H1 (cell line): ENCODE measurements at regions of chr18 and their contacts with region 1.

Region 1: GRCh38 chr18:63963615-63964256 is 6.1 kb upstream of the SERPINB8 start:
- DNase-seq: no peak
- H3K4me3 ChIP-seq: no peak overlapping the region
- H3K27ac ChIP-seq: no peak overlapping the region
- H3K4me1 ChIP-seq: no peaks in the 10 kb centered on the region; a peak in 1 of 7 replicates
- H3K27me3 ChIP-seq: no peaks in the 10 kb centered on the region; a peak in 1 of 7 replicates
- CTCF ChIP-seq: peak in 2 of 3 experiments; percentile 66 to 83; a peak in 3 of 4 replicates
- EP300 ChIP-seq: no peak
- POLR2A ChIP-seq: no peak
- RAD21 ChIP-seq: peak; percentile 64 to 65

Region 2: DNA sequence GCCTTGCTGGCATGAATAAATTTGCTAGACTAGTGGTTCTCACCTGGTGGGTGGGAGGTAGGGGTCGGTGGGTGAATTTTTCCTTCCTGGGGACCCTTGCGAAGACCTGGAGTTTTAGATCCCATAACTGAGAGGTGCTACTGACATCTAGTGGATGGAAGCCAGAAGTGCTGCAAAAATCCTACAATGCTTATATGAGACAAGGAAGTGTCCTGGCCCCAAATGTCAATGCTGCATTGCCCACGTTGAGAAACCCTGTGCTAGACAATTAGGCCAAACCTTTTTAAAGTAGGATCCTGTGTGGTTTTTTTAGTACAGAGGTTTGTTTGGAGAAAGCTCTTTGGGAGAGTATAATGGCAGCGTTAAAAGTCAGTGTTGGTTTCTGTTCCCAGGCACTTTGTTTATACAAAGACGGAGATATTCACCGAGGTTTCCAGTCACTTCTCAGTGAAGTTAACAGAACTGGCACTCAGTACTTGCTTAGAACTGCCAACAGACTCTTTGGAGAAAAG is 15.7 kb after region 1 on chr18:
- CTCF ChIA-PET with region 1: interaction called, 59 read pairs
- POLR2A ChIA-PET with region 1: no interaction called
- DNase-seq: peak in 1 of 2 experiments; percentile 61
- H3K4me3 ChIP-seq: no peak overlapping the region
- H3K27ac ChIP-seq: no peak overlapping the region
- H3K4me1 ChIP-seq: no peaks in the 10 kb centered on the region
- H3K27me3 ChIP-seq: peaks cover 21 to 52% (median 34%) of the 10 kb centered on the region in 4 experiments
- CTCF ChIP-seq: peak in 2 of 3 experiments; percentile 78 to 87; a peak in 3 of 4 replicates
- EP300 ChIP-seq: no peak
- POLR2A ChIP-seq: no peak
- RAD21 ChIP-seq: peak; percentile 80 to 81

Region 3: GRCh38 chr18:63987743-63988142 is 24.0 kb after region 1 on chr18:
- CTCF ChIA-PET with region 1: interaction called, 34 read pairs
- POLR2A ChIA-PET with region 1: no interaction called
- DNase-seq: no peak
- H3K4me3 ChIP-seq: no peak overlapping the region
- H3K27ac ChIP-seq: no peak overlapping the region
- H3K4me1 ChIP-seq: no peaks in the 10 kb centered on the region
- H3K27me3 ChIP-seq: no peaks in the 10 kb centered on the region
- CTCF ChIP-seq: no peak
- EP300 ChIP-seq: no peak
- POLR2A ChIP-seq: no peak
- RAD21 ChIP-seq: no peak

Region 4: DNA sequence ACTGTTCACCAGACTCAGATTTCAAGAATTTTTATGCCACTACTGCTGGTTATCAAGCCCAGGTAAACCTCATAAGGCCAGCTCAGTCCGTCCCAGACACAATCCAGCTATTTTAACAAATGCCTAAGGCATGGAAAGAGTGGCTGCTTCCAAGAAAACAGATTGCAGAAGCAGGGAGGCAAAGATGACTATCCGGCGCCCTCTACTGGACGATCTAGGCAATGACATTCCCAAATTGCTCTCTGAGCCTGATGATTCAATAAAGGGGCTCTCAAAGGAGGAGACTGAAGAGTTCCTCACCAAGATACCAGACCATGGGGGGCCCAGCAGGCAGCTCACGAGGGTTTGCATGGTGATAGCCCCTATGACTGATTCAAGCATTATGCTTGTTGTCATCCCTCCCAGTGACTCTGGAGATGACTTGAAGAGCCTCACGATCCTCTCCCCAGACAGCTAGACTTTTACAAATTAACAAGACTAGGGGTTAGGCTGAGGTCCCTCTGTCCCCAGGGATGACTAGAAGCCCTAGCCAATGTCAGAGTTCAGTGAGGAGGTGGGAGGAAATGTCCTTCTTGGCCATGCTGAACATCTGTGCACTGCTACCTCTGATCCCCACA is 31.2 kb after region 1 on chr18:
- CTCF ChIA-PET with region 1: interaction called, 29 read pairs
- POLR2A ChIA-PET with region 1: no interaction called
- DNase-seq: peak; percentile 29 to 77
- H3K4me3 ChIP-seq: no peak overlapping the region
- H3K27ac ChIP-seq: no peak overlapping the region
- H3K4me1 ChIP-seq: no peaks in the 10 kb centered on the region
- H3K27me3 ChIP-seq: no peaks in the 10 kb centered on the region
- CTCF ChIP-seq: peak; percentile 49 to 88 (median 73)
- EP300 ChIP-seq: no peak
- POLR2A ChIP-seq: no peak
- RAD21 ChIP-seq: peak; percentile 75 to 76